ENCODE measurements at regions of chr13 and their contacts with region 1.

Region 1: GRCh38 chr13:59280297-59280696 is 883.4 kb downstream of the DIAPH3 start:
- DNase-seq: no peak

Region 2: GRCh38 chr13:59696271-59696670 is 416.0 kb after region 1 on chr13:
- intact Hi-C with region 1: loop called in 1 of 2 experiments (anchors 5 kb)
- DNase-seq: no peak